ENCODE measurements at regions of chr20 and their contacts with region 1.

Region 1: GRCh38 chr20:60424267-60424902 is 466.2 kb downstream of the CDH26 start:
- DNase-seq: peak; percentile 3
- ATAC-seq: no peak
- H3K4me3 ChIP-seq: no peak overlapping the region
- H3K27ac ChIP-seq: no peak overlapping the region
- H3K4me1 ChIP-seq: no peaks in the 10 kb centered on the region
- H3K27me3 ChIP-seq: no peaks in the 10 kb centered on the region
- CTCF ChIP-seq: no peak
- POLR2A ChIP-seq: no peak
- RAD21 ChIP-seq: no peak

Region 2: GRCh38 chr20:60410618-60411264 is 13.6 kb before region 1 on chr20:
- CTCF ChIA-PET with region 1: no interaction called
- POLR2A ChIA-PET with region 1: interaction called, 12 read pairs
- dilution Hi-C with region 1: no loop called
- in situ Hi-C with region 1: no loop called
- intact Hi-C with region 1: no loop called
- DNase-seq: no peak
- ATAC-seq: no peak
- H3K4me3 ChIP-seq: no peak overlapping the region
- H3K27ac ChIP-seq: no peak overlapping the region
- H3K4me1 ChIP-seq: no peaks in the 10 kb centered on the region
- H3K27me3 ChIP-seq: no peaks in the 10 kb centered on the region
- CTCF ChIP-seq: no peak
- POLR2A ChIP-seq: no peak
- RAD21 ChIP-seq: no peak